CD8-positive, alpha-beta T cell (primary cell): ENCODE measurements at regions of chr9 and their contacts with region 1.

Region 1: GRCh38 chr9:34206561-34206960 is 27.7 kb downstream of the UBAP1 start:
- DNase-seq: no peak
- ATAC-seq: no peak
- H3K4me3 ChIP-seq: no peak overlapping the region
- H3K4me3 Mint-ChIP-seq: no peak overlapping the region
- H3K27ac ChIP-seq: no peak overlapping the region
- H3K27ac Mint-ChIP-seq: no peak overlapping the region
- H3K4me1 ChIP-seq: no peaks in the 10 kb centered on the region
- H3K4me1 Mint-ChIP-seq: peaks cover 48% of the 10 kb centered on the region
- H3K27me3 ChIP-seq: no peaks in the 10 kb centered on the region
- H3K27me3 Mint-ChIP-seq: no peaks in the 10 kb centered on the region
- CTCF ChIP-seq: no peak

Region 2: DNA sequence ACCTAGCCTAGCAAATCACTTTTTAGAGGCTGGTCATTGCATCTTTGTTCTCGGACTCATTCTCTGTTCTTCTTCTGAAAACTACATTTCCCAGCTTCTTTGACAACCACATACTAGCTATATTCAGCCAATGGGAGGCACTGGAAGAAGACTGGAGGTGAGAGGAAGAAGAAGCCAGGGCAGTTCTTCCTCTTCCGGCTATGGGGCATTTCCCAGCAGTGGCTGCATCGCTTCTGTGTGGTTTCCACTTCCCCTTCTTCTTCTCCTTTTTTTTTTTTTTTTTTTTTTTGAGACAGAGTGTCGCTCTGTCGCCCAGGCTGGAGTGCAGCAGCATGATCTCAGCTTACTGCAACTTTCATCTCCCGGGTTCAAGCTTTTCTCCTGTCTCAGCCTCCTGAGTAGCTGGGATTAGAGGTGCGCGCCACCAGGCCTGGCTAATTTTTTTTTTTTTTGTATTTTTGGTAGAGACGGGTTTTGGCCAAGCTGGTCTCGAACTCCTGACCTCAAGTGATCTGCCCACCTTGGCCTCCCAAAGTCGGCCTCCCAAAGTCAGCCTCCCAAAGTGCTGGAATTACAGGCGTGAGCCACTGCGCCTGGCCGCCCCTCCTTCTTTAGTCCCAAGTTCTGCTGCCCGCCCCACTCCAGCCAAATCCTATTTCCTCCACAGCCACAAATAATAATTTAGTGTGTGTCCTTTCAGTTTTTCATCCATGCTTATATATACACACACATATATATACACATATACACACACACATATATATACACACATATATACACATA is 34.6 kb before region 1 on chr9:
- CTCF ChIA-PET with region 1: interaction called, 3 read pairs
- POLR2A ChIA-PET with region 1: no interaction called
- intact Hi-C with region 1: loop called in 1 of 2 experiments (anchors 5 kb)
- DNase-seq: peak in 6 of 9 experiments; percentile 27 to 83 (median 59)
- ATAC-seq: peak; percentile 95
- H3K4me3 ChIP-seq: no peak overlapping the region
- H3K4me3 Mint-ChIP-seq: peak overlapping the region; percentile 62
- H3K27ac ChIP-seq: no peak overlapping the region
- H3K27ac Mint-ChIP-seq: peak overlapping the region; percentile 55
- H3K4me1 ChIP-seq: peaks cover 8% of the 10 kb centered on the region
- H3K4me1 Mint-ChIP-seq: peaks cover 10% of the 10 kb centered on the region
- H3K27me3 ChIP-seq: no peaks in the 10 kb centered on the region
- H3K27me3 Mint-ChIP-seq: no peaks in the 10 kb centered on the region
- CTCF ChIP-seq: no peak